Activated naive CD4-positive, alpha-beta T cell treated with anti-CD3 and anti-CD28 coated beads for 36 hours (primary cell): ENCODE measurements at regions of chr21 and their contacts with region 1.

Region 1: DNA sequence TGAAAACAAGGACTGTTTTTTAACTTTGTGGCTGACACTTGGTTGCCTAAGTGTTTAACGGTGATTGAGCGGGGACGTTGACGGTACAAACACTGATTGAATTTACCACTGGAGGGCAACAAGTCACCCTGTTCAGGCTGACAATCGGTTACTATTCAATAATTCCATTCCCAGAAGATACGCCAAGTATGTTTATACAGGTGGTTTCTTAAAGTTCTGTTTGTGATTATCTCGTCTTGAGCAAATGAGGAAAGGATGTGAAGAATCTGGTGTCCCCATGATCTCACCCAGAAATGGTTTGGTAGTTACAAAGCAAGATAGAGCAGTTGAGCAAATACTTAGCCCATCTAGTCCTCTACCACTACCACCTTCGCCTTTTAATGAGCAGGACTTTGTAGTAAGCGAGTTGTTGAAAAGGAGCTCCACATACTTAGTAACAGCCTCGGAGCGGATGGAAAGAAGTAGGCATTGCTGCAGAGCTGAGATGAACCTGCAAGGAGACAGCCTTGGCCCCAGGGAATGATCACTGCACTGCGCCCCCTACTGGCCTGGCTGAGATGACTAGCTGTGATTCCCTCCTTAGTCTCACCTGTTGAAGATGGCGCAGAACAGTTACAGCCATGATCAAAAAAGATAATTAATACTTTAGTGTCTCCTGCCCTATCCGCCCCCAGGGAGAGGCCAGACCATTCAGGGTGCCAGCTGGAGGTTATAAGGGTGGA is 36.3 kb downstream of the IFNAR1 start:
- DNase-seq: peak; percentile 97
- H3K4me3 Mint-ChIP-seq: peak overlapping the region; percentile 86
- H3K27ac Mint-ChIP-seq: peak overlapping the region; percentile 95
- H3K4me1 Mint-ChIP-seq: peaks cover 17% of the 10 kb centered on the region
- H3K27me3 Mint-ChIP-seq: no peaks in the 10 kb centered on the region

Region 2: GRCh38 chr21:33266050-33266788 is 94.8 kb before region 1 on chr21 and contains the start of gene IL10RB:
- CTCF ChIA-PET with region 1: interaction called, 4 read pairs
- intact Hi-C with region 1: loop called (anchors 2 kb)
- DNase-seq: peak; percentile 65
- H3K4me3 Mint-ChIP-seq: peak within 1 kb of the TSS; percentile 99
- H3K27ac Mint-ChIP-seq: peak within 1 kb of the TSS; percentile 95
- H3K4me1 Mint-ChIP-seq: peaks cover 49% of the 10 kb centered on the region
- H3K27me3 Mint-ChIP-seq: no peaks in the 10 kb centered on the region
- total RNA-seq, gene IL10RB: 23.9 TPM

Region 3: DNA sequence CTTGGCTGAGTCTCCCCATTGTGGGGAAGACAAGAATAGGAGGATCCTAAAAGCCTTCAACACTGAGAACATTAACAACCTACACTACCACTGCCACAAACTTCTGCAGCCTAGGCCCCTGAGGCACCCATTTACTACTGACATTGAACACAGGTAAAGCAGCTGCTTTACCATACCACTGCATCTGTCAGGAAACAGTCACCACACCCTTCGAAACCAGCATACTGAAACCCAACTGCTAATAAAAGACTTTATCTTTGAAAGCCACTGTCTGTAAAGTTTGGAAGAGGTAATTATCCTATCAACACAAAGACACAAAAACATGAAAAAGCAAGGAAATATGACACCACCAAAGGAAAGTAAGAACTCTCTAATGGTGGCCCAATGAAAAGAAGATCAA is 28.9 kb before region 1 on chr21:
- CTCF ChIA-PET with region 1: interaction called, 14 read pairs
- intact Hi-C with region 1: no loop called
- DNase-seq: peak; percentile 23
- H3K4me3 Mint-ChIP-seq: no peak overlapping the region
- H3K27ac Mint-ChIP-seq: peak overlapping the region; percentile 32
- H3K4me1 Mint-ChIP-seq: peaks cover 66% of the 10 kb centered on the region
- H3K27me3 Mint-ChIP-seq: no peaks in the 10 kb centered on the region

Region 4: GRCh38 chr21:33386222-33386784 is 25.3 kb after region 1 on chr21:
- CTCF ChIA-PET with region 1: interaction called, 11 read pairs
- intact Hi-C with region 1: no loop called
- DNase-seq: no peak
- H3K4me3 Mint-ChIP-seq: no peak overlapping the region
- H3K27ac Mint-ChIP-seq: no peak overlapping the region
- H3K4me1 Mint-ChIP-seq: peaks cover 43% of the 10 kb centered on the region
- H3K27me3 Mint-ChIP-seq: peaks cover 5% of the 10 kb centered on the region

Region 5: DNA sequence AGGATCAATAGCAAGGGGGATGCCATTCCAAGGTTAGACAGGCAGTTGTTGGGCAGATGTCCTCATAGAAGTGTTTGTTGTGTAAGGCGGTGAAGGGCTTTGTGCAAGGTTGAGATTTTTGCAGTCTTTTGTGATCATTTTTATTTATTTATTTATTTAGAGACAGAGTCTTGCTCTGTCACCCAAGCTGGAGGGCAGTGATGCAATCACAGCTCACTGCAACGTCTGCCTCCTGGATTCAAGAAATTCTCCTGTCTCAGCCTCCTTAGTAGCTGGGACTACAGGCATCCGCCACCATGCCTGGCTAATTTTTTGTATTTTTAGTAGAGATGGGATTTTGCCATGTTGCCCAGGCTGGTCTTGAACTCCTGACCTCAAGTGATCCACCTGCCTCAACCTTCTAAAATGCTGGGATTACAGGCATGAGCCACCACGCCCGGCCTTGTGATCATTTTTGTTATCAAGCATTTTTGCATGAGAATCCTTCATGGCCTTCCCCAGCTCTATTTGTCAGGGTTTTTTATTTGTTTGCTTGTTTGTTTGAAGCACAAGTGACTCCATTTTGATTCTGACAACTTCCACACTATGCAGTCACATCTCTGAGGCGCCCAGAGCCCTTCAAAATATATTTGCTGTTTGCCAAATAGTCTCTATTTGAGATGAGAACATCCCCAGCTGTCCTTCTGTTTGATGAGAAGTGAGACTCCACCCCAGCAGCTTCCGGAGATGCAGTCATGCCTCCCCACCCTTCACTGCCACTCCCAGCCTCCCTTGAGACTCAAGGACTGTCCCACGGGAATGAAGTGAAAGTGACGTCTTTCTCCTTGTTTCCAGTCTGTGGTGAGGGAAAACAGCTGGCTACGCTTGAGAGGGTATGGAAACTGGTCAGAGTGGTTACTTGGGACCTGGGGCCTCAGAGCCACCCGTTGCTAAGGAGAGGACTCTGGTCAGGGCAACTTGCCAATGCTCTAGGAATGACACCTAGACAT is 80.7 kb after region 1 on chr21:
- CTCF ChIA-PET with region 1: interaction called, 79 read pairs
- intact Hi-C with region 1: loop called (anchors 1 kb)
- DNase-seq: no peak
- H3K4me3 Mint-ChIP-seq: no peak overlapping the region
- H3K27ac Mint-ChIP-seq: no peak overlapping the region
- H3K4me1 Mint-ChIP-seq: peaks cover 4% of the 10 kb centered on the region
- H3K27me3 Mint-ChIP-seq: no peaks in the 10 kb centered on the region

Region 6: GRCh38 chr21:33522953-33523349 is 161.9 kb after region 1 on chr21:
- CTCF ChIA-PET with region 1: no interaction called
- intact Hi-C with region 1: no loop called
- DNase-seq: no peak
- H3K4me3 Mint-ChIP-seq: no peak overlapping the region
- H3K27ac Mint-ChIP-seq: no peak overlapping the region
- H3K4me1 Mint-ChIP-seq: no peaks in the 10 kb centered on the region
- H3K27me3 Mint-ChIP-seq: no peaks in the 10 kb centered on the region

Region 7: DNA sequence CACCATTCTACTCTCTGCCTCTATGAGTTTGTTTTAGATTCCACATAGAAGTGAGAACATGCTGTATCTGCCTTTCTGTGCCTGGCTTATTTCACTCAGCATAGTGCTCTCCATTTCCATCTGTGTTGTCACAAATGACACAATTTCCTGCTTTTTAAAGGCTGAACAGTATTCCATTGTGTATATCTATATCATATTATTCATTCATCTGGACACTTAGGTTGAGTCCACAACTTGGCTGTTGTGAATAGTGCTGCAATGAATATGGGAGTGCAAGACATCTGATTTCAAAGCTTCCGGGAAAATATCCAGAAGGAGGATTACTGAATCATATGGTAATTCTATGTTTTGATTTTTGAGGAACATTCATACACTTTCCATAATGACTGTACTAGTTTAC is 247.5 kb after region 1 on chr21:
- CTCF ChIA-PET with region 1: interaction called, 7 read pairs
- intact Hi-C with region 1: loop called (anchors 1 kb)
- DNase-seq: no peak
- H3K4me3 Mint-ChIP-seq: no peak overlapping the region
- H3K27ac Mint-ChIP-seq: peak overlapping the region; percentile 1
- H3K4me1 Mint-ChIP-seq: no peaks in the 10 kb centered on the region
- H3K27me3 Mint-ChIP-seq: no peaks in the 10 kb centered on the region